Aorta (tissue), 5 donors: ENCODE measurements at regions of chr1 and their contacts with region 1.

Region 1: DNA sequence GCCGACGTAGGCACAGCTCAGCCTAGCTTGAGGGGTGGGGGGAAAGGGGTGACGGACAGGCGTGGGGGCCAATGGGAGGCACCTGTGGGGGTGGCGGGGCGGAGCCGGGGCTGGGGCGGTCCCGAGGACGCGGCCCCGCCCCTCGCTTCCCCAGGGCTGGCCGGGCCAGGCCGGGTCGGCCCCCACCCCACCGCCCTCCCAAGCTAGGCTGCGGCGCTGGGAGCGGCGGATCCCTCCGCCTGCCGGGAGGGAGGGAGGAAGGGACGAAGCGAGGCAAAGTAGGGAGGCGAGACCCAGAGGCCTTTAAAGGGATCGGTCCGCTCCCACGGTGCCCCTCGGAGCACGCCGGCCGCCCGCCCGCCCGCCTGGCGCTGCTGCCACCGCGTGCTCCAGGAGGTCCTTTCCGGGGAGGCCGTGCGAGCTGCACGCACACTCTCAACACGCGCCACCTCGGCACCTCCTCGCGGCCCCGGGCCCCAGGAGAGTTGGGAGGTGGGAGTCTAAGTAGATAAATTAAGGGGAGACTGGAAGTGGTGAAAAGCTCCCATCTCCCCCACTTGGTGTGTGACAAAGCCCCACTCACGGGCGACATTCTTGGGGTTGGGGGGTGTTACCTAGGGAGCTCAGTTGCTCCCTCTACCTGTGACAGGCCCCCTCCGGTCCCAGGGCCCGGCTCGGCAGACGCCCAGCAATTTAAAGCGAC is 373 bp upstream of the MEF2D start:
- DNase-seq: peak; percentile 96 to 98
- ATAC-seq: peak; percentile 92
- H3K4me3 ChIP-seq: peak overlapping the region; percentile 49 to 73
- H3K27ac ChIP-seq: peak overlapping the region; percentile 96 to 98
- H3K4me1 ChIP-seq: peaks cover 3 to 10% of the 10 kb centered on the region in 2 donors
- H3K27me3 ChIP-seq: no peaks in the 10 kb centered on the region

Region 2: GRCh38 chr1:156461781-156462647 is 38.9 kb before region 1 on chr1:
- intact Hi-C with region 1: loop called (anchors 2 to 5 kb)
- DNase-seq: no peak
- ATAC-seq: no peak
- H3K4me3 ChIP-seq: no peak overlapping the region
- H3K27ac ChIP-seq: peak overlapping the region in 1 of 2 donors; percentile 42
- H3K4me1 ChIP-seq: no peaks in the 10 kb centered on the region
- H3K27me3 ChIP-seq: no peaks in the 10 kb centered on the region